HCT116 (cell line): ENCODE measurements at regions of chr9 and their contacts with region 1.

Region 1: GRCh38 chr9:111597817-111598729 is 1.4 kb downstream of the PTGR1 start:
- DNase-seq: peak; percentile 63
- ATAC-seq: peak; percentile 54
- H3K4me3 ChIP-seq: peak overlapping the region; percentile 69 to 85
- H3K27ac ChIP-seq: peak overlapping the region; percentile 65
- H3K4me1 ChIP-seq: peaks cover 7 to 12% of the 10 kb centered on the region in 2 experiments; a peak in 3 of 4 replicates
- H3K27me3 ChIP-seq: no peaks in the 10 kb centered on the region
- CTCF ChIP-seq: peak; percentile 68 to 78 (median 69); a peak in 5 of 6 replicates
- POLR2A ChIP-seq: no peak
- RAD21 ChIP-seq: peak; percentile 87

Region 2: DNA sequence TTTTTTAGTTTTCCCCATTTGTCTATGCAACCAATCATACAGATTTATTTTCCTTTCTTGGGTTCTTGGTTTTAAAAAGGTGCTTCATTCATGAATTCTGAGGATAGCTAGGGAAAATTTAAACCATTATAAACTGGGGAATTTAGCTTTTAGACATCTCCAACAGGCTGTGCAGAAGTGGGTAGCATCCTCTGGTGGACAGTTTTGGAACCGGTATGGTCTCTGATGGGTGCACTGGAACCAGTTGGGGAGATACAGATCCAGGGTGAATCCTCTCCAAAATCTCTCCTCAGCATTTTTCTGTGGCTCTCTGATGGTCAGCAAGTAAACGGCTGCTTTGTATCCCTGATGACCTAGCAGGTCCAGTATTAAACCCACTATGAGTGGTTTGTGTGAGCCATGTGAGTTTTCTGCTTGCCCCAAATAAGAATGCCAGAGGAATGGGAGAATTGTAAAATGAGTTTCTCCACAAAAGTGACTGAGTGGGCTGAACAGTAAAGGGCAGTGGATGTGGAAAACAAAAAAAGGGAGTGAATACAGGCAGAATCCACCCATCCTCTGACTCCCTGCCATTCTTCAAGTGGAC is 23.9 kb after region 1 on chr9:
- CTCF ChIA-PET with region 1: interaction called, 38 read pairs
- POLR2A ChIA-PET with region 1: interaction called, 3 read pairs
- RAD21 ChIA-PET with region 1: interaction called, 3 to 11 read pairs
- intact Hi-C with region 1: loop called (anchors 1 kb)
- DNase-seq: peak; percentile 39
- ATAC-seq: peak; percentile 99
- H3K4me3 ChIP-seq: no peak overlapping the region
- H3K27ac ChIP-seq: no peak overlapping the region
- H3K4me1 ChIP-seq: peaks cover 7 to 10% of the 10 kb centered on the region in 2 experiments
- H3K27me3 ChIP-seq: no peaks in the 10 kb centered on the region
- CTCF ChIP-seq: peak; percentile 79 to 96 (median 95)
- POLR2A ChIP-seq: no peak
- RAD21 ChIP-seq: peak; percentile 84

Region 3: DNA sequence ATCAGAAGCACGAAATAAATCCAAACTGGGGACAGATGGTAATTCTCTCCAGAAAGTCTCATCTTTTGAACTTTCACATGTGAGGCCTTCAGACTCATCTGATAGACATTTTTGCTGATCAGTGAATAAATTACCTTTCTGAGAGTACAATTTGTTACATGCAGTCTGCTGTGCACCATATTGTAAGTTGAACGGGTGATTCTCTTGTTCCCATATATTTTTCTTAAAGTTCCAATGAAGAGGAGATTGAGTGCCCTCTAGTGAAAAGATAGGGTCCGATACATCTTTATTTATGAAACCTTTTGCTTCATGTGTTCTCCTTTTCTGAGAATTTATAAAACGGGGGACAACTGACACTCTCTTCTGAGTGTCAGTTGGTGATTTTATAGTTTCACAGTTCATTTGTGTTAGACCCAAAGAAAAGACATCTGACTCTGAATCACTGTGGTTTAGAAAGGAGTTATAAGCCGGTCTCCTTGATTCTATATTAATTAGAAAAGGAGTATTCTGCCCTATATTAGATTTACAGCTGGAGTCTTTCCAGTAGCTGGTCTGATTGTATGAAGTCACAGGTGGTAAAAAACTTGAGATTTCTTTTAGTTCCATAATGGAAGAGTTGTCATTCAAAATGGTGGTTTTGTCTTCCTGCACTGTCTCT is 93.7 kb after region 1 on chr9:
- CTCF ChIA-PET with region 1: interaction called, 16 read pairs
- POLR2A ChIA-PET with region 1: interaction called, 4 read pairs
- RAD21 ChIA-PET with region 1: no interaction called
- intact Hi-C with region 1: loop called (anchors 1 kb)
- DNase-seq: peak; percentile 24
- ATAC-seq: peak; percentile 74
- H3K4me3 ChIP-seq: no peak overlapping the region
- H3K27ac ChIP-seq: no peak overlapping the region
- H3K4me1 ChIP-seq: peaks cover 0 to 4% of the 10 kb centered on the region in 2 experiments; a peak in 1 of 4 replicates
- H3K27me3 ChIP-seq: no peaks in the 10 kb centered on the region
- CTCF ChIP-seq: peak; percentile 39 to 57 (median 54); a peak in 5 of 6 replicates
- POLR2A ChIP-seq: no peak
- RAD21 ChIP-seq: peak; percentile 68

Region 4: DNA sequence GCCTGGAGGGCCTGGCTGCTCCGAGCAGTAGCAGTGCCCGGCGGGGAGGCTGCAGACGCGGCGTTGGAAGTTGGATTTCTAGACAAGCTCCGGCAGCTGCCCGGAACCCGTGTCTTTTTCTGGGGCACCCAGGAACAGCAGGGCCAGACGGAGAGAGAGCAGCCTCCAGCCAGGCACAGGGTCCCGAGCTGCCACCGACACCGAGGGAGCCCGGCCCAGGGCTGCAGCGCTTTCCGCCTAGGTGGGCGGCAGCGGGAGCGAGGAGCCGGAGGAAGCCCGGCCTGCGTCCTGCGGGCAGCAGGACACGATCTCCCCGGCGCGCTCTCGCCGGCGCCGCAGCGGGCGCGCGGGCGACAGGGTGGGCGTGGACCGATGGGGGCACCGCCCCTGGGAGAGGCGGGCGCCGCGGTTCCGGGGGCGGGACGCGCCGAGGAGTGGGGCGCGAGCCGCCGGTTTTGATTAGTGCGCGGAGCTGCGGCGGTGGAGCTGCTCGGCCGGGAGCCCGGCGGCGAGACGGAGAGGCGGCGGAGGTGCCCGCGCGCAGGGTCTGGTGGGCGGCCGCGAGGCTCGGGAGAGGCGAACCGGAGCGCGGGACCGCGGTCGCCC is 298.4 kb after region 1 on chr9 and contains the start of gene UGCG:
- CTCF ChIA-PET with region 1: no interaction called
- POLR2A ChIA-PET with region 1: no interaction called
- RAD21 ChIA-PET with region 1: no interaction called
- intact Hi-C with region 1: loop called (anchors 5 kb)
- DNase-seq: peak; percentile 72
- ATAC-seq: peak; percentile 83
- H3K4me3 ChIP-seq: peak within 1 kb of the TSS; percentile 77 to 81
- H3K27ac ChIP-seq: peak within 1 kb of the TSS; percentile 92
- H3K4me1 ChIP-seq: peaks cover 29 to 86% of the 10 kb centered on the region in 2 experiments
- H3K27me3 ChIP-seq: no peaks in the 10 kb centered on the region
- CTCF ChIP-seq: no peak
- POLR2A ChIP-seq: peak; percentile 98
- RAD21 ChIP-seq: no peak
- total RNA-seq, gene UGCG: 32.6 TPM

Region 5: GRCh38 chr9:112074250-112075008 is 476.4 kb after region 1 on chr9:
- CTCF ChIA-PET with region 1: interaction called, 13 read pairs
- POLR2A ChIA-PET with region 1: no interaction called
- RAD21 ChIA-PET with region 1: no interaction called
- intact Hi-C with region 1: loop called (anchors 1 kb)
- DNase-seq: peak; percentile 54
- ATAC-seq: peak; percentile 83
- H3K4me3 ChIP-seq: no peak overlapping the region
- H3K27ac ChIP-seq: no peak overlapping the region
- H3K4me1 ChIP-seq: peaks cover 16 to 51% of the 10 kb centered on the region in 2 experiments
- H3K27me3 ChIP-seq: no peaks in the 10 kb centered on the region
- CTCF ChIP-seq: peak; percentile 89 to 97 (median 90)
- POLR2A ChIP-seq: no peak
- RAD21 ChIP-seq: peak; percentile 97